ENCODE measurements at regions of chr10 and their contacts with region 1.

Region 1: GRCh38 chr10:72331601-72332422 is 22.9 kb downstream of the DNAJB12 start:
- DNase-seq: peak; percentile 84
- H3K4me3 Mint-ChIP-seq: peak overlapping the region; percentile 76
- H3K27ac Mint-ChIP-seq: peak overlapping the region; percentile 99
- H3K4me1 Mint-ChIP-seq: peaks cover 76% of the 10 kb centered on the region
- H3K27me3 Mint-ChIP-seq: no peaks in the 10 kb centered on the region

Region 2: DNA sequence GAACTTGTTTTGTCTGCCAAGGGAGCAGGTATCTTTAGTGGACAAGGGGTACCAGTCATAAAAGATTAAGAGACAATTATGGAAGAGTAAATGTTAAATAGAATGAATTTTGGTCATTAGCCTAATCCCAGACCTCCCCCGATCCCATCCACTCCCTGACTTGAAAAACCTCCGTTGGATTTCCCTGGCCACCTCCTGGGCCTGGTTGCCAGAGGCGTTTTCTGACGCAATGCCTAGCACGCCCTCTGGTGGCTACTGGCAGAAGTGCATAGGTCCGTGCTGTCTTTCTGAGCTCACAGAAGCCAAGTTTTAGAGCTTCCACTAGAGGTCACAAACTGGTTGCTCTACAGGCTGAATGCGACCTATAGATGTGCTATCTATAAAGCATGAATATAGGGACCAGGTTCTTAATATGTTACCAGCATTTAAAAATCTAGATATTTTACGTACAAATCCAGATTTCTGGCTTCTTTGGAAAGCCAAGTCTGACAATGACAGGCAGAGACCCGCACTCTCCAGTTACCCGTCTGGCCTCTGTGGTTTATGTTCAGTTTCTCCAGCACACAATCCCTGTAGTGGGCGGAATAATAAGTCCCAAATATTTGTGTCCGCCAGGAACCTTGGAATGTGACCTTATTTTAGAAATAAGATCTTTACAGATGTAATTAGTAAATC is 283.2 kb before region 1 on chr10:
- intact Hi-C with region 1: loop called (anchors 2 kb)
- DNase-seq: peak; percentile 79
- H3K4me3 Mint-ChIP-seq: no peak overlapping the region
- H3K27ac Mint-ChIP-seq: peak overlapping the region; percentile 7
- H3K4me1 Mint-ChIP-seq: peaks cover 18% of the 10 kb centered on the region
- H3K27me3 Mint-ChIP-seq: no peaks in the 10 kb centered on the region

Region 3: GRCh38 chr10:72173635-72174296 is 158.0 kb before region 1 on chr10:
- intact Hi-C with region 1: no loop called
- DNase-seq: no peak
- H3K4me3 Mint-ChIP-seq: no peak overlapping the region
- H3K27ac Mint-ChIP-seq: no peak overlapping the region
- H3K4me1 Mint-ChIP-seq: peaks cover 25% of the 10 kb centered on the region
- H3K27me3 Mint-ChIP-seq: no peaks in the 10 kb centered on the region

Region 4: GRCh38 chr10:72215652-72216549 is 115.9 kb before region 1 on chr10 and contains the starts of genes ANAPC16 and ASCC1:
- intact Hi-C with region 1: loop called (anchors 1 kb)
- DNase-seq: peak; percentile 93
- H3K4me3 Mint-ChIP-seq: peak within 1 kb of the TSS; percentile 94
- H3K27ac Mint-ChIP-seq: peak within 1 kb of the TSS; percentile 99
- H3K4me1 Mint-ChIP-seq: peaks cover 32% of the 10 kb centered on the region
- H3K27me3 Mint-ChIP-seq: no peaks in the 10 kb centered on the region
- total RNA-seq, gene ANAPC16: 94.1 and 95.9 TPM in 2 replicates
- total RNA-seq, gene ASCC1: 46.2 and 49.6 TPM in 2 replicates

Region 5: GRCh38 chr10:72260588-72261322 is 71.1 kb before region 1 on chr10:
- intact Hi-C with region 1: loop called (anchors 1 kb)
- DNase-seq: peak; percentile 85
- H3K4me3 Mint-ChIP-seq: peak overlapping the region; percentile 82
- H3K27ac Mint-ChIP-seq: peak overlapping the region; percentile 97
- H3K4me1 Mint-ChIP-seq: peaks cover 51% of the 10 kb centered on the region
- H3K27me3 Mint-ChIP-seq: no peaks in the 10 kb centered on the region

Region 6: DNA sequence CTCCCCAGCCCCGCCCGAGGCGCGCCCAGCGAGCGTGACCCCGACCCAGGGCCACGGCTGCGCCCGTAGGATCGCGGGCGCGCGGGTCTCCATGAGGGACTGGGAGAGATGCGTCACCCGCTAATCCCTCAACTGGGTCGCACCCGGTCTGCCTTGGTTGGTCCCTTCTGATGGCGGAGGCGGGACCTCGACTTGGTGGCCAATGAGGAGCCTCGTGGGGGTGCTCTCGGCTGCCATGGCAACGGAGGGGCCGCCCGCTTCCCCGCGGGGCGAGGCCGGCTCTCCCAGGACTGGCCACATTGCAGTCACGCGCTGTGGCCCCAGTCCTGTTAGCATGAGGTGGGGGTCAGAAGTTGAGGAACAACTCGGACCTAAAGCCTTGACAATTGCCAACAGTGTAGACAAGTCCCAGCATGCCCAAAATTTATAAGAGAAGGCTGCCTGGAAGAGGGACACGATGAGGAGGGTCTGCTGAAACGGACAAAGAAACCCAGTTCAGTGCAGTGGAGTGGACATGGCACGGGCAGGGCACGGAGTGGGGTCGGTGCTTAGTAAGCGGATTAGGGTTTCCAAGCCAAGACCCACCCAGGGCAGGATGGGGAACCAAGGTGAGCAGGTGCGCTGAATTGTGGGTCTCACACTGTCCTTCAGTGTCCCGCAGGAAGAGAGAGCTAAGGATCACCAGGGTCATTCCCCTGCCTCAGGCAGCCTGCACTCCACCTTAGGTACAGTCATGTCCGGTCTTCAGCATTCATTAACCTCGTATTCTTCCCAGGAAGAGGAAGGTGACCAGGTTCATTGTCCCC is 33.6 kb before region 1 on chr10:
- intact Hi-C with region 1: loop called (anchors 1 kb)
- DNase-seq: peak; percentile 91
- H3K4me3 Mint-ChIP-seq: peak overlapping the region; percentile 76
- H3K27ac Mint-ChIP-seq: peak overlapping the region; percentile 98
- H3K4me1 Mint-ChIP-seq: peaks cover 50% of the 10 kb centered on the region
- H3K27me3 Mint-ChIP-seq: no peaks in the 10 kb centered on the region

Region 7: DNA sequence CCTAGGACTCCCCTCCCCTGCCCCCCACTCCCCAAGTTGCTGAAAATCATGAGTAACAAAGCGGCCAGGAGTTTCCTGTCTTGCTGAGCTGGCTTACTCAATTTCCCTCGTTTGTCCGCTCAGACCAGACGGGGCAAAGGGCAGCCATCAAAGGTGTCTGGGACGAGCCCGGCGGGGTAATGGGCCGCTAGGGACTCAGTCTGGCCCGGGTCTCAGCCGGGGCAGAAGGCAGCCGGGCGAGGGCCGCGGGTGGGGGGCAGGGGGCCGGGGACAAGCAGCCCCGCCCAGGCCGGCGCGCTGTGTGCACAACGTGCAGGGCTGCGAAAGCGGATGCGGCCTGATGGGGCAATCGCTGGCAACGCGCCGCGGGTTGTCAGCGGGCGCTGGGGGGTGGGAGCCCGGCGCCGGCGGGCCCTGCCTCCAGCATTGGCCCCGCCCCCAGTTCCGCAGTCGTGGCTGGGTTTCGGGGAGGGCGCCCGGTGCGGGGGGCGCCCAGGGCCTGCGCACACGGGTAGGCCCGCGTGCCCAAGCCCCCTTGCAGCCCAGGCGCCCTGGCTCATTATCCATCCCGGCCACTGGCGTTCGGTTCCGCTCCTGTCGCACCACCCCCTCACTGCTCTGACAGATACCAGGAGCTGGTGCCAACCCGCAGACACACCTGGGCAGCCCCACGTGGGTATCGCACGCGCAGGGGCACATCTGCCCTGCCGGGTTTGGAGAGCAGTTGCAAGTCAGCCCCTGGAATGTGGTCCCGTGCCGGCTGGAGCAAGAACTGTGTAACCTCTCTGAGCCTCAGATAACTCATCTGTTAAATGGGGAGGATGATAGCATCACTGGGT is 12.2 kb before region 1 on chr10:
- intact Hi-C with region 1: loop called (anchors 1 kb)
- DNase-seq: peak; percentile 82
- H3K4me3 Mint-ChIP-seq: peak overlapping the region; percentile 81
- H3K27ac Mint-ChIP-seq: peak overlapping the region; percentile 99
- H3K4me1 Mint-ChIP-seq: peaks cover 68% of the 10 kb centered on the region
- H3K27me3 Mint-ChIP-seq: no peaks in the 10 kb centered on the region

Measured in activated T-helper 2 cell treated with anti-CD3 and anti-CD28 coated beads, Interferon-gamma antibody, Interleukin-2, Interleukin-4, amounts not matched to agents 10 μg/mL and 5 μg/mL and 100 μg/mL, durations not matched to agents 14 hours and 24 hours and 36 hours (primary cell).